BJ (cell line): ENCODE measurements at regions of chr9 and their contacts with region 1.

Region 1: GRCh38 chr9:97615439-97616072 is 17.6 kb downstream of the TSTD2 start:
- DNase-seq: no peak
- H3K4me3 ChIP-seq: no peak overlapping the region
- H3K27me3 ChIP-seq: no peaks in the 10 kb centered on the region
- CTCF ChIP-seq: peak; percentile 80

Region 2: GRCh38 chr9:97386733-97387503 is 228.6 kb before region 1 on chr9:
- CTCF ChIA-PET with region 1: interaction called, 12 read pairs
- POLR2A ChIA-PET with region 1: no interaction called
- DNase-seq: no peak
- H3K4me3 ChIP-seq: no peak overlapping the region
- H3K27me3 ChIP-seq: peaks cover 2% of the 10 kb centered on the region
- CTCF ChIP-seq: peak; percentile 99

Region 3: DNA sequence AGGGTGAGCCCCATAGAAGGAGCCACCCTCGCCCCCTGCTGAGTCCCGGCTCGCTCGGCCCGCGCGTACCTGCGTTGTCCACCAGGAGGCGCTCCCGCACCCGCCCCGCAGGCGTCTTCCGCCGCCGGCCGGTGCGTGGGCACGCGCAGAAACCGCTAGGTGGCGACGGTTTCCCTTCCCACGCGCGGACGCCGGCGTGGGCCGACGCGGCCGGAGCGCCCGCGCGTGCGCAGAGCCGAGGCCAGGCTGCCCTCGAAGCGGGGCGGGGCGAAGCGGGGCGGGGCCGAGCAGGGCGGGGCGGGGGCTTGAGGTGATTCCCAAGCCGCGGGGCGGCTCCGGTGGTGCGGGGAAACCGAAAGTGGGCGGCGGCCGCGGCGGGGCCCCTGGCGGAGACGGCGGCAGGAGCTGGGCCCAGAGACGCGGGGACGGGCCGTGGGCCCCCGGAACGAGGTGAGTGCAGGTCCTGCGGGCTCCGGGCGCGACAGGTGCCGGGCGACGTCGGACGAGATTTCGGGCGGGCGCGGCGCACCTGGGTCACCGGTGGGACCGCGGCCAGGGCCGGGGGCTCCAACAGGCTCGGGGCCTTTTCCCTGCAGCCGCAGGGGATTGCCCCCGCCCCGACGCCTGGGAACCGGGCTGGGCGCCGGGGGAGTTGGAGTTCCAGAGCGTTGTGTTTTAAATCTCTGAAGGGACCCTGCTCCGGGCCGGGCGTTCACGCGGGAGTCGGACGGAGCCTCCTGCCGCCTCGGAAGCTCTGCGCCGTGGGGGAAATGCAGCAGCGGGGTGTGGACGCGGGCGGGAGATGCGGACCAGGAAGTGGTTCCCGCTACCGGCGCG is 203.5 kb before region 1 on chr9 and contains the start of gene TDRD7:
- CTCF ChIA-PET with region 1: interaction called, 54 read pairs
- POLR2A ChIA-PET with region 1: no interaction called
- DNase-seq: no peak
- H3K4me3 ChIP-seq: peak within 1 kb of the TSS; percentile 88
- H3K27me3 ChIP-seq: peaks cover 11% of the 10 kb centered on the region
- CTCF ChIP-seq: peak; percentile 89
- polyA plus RNA-seq, gene TDRD7: 5.4 and 9.4 TPM in 2 replicates

Region 4: GRCh38 chr9:97468658-97469448 is 146.7 kb before region 1 on chr9:
- CTCF ChIA-PET with region 1: interaction called, 142 read pairs
- POLR2A ChIA-PET with region 1: no interaction called
- DNase-seq: no peak
- H3K4me3 ChIP-seq: no peak overlapping the region
- H3K27me3 ChIP-seq: no peaks in the 10 kb centered on the region
- CTCF ChIP-seq: peak; percentile 84

Region 5: GRCh38 chr9:97475059-97475458 is 140.5 kb before region 1 on chr9:
- CTCF ChIA-PET with region 1: interaction called, 142 read pairs
- POLR2A ChIA-PET with region 1: no interaction called
- DNase-seq: peak; percentile 23
- H3K4me3 ChIP-seq: no peak overlapping the region
- H3K27me3 ChIP-seq: no peaks in the 10 kb centered on the region
- CTCF ChIP-seq: no peak

Region 6: GRCh38 chr9:97632985-97633858 is 17.7 kb after region 1 on chr9 and contains the starts of genes NCBP1 and TSTD2:
- CTCF ChIA-PET with region 1: interaction called, 37 read pairs
- POLR2A ChIA-PET with region 1: no interaction called
- DNase-seq: peak; percentile 90
- H3K4me3 ChIP-seq: peak within 1 kb of the TSS; percentile 88
- H3K27me3 ChIP-seq: no peaks in the 10 kb centered on the region
- CTCF ChIP-seq: no peak
- polyA plus RNA-seq, gene NCBP1: 11.0 and 21.8 TPM in 2 replicates
- polyA plus RNA-seq, gene TSTD2: 15.4 and 18.4 TPM in 2 replicates